PC-9 (cell line): ENCODE measurements at regions of chr18 and their contacts with region 1.

Region 1: DNA sequence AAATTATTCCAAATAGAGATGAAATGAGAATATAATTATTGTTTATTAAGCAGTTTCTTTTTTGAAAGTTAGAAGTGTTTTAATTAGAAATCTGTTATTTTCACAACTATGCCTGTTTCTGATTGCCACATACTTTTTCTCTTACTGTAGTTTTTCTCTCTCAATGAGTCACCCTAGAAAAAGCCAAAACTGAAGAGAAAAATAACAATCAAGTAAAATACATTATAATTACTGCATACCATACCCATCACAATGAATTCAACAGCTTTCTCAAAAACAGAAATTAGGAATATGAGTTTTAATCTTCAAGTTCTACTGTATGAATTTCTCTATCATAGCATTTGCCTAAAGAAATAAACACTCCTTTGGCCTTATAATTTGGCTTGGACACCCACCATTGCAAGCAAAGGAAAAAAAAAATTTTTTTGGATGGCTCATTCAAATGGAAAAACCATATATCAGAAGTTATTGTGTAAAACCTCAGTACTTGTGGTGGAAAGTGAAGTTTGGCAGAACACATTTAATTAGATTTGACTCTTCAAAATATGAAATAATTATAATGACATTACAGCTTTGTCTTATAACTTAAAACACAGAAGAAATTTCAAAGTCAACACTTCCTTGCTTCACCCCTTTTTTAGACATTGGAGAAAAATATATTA is 138.5 kb downstream of the DYM start:
- DNase-seq: no peak
- H3K4me3 ChIP-seq: no peak overlapping the region
- H3K27ac ChIP-seq: peak overlapping the region; percentile 55
- H3K4me1 ChIP-seq: peaks cover 13% of the 10 kb centered on the region
- H3K27me3 ChIP-seq: no peaks in the 10 kb centered on the region
- CTCF ChIP-seq: no peak

Region 2: DNA sequence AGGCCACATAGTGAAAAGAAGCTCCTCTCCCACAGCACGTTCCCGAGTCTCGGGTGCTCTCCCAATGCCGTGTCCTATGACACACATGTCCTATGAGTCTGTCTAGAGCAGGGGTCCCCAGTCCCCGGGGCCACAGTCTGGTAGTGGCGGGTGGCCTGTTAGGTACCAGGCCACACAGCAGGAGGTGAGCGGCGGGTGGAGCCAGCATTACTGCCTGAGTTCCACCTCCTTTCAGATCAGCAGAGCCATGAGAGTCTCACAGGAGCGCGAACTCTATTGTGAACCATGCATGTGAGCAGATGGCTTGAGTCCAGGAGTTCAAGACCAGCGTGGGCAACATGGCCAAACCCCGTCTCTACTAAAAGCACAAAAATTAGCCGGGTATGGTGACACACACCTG is 1025.3 kb before region 1 on chr18:
- CTCF ChIA-PET with region 1: no interaction called
- POLR2A ChIA-PET with region 1: interaction called, 13 read pairs
- intact Hi-C with region 1: no loop called
- DNase-seq: no peak
- H3K4me3 ChIP-seq: no peak overlapping the region
- H3K27ac ChIP-seq: no peak overlapping the region
- H3K4me1 ChIP-seq: peaks cover 45% of the 10 kb centered on the region
- H3K27me3 ChIP-seq: no peaks in the 10 kb centered on the region
- CTCF ChIP-seq: no peak

Region 3: GRCh38 chr18:48861181-48861708 is 460.7 kb before region 1 on chr18:
- CTCF ChIA-PET with region 1: interaction called, 11 read pairs
- POLR2A ChIA-PET with region 1: no interaction called
- intact Hi-C with region 1: no loop called
- DNase-seq: no peak
- H3K4me3 ChIP-seq: no peak overlapping the region
- H3K27ac ChIP-seq: no peak overlapping the region
- H3K4me1 ChIP-seq: no peaks in the 10 kb centered on the region
- H3K27me3 ChIP-seq: no peaks in the 10 kb centered on the region
- CTCF ChIP-seq: no peak

Region 4: GRCh38 chr18:49274188-49274714 is 47.7 kb before region 1 on chr18:
- CTCF ChIA-PET with region 1: no interaction called
- POLR2A ChIA-PET with region 1: no interaction called
- intact Hi-C with region 1: no loop called
- DNase-seq: no peak
- H3K4me3 ChIP-seq: no peak overlapping the region
- H3K27ac ChIP-seq: peak overlapping the region; percentile 13; the same call in 1 of the 2 replicates
- H3K4me1 ChIP-seq: peaks cover 9% of the 10 kb centered on the region; the same call in 1 of the 2 replicates
- H3K27me3 ChIP-seq: no peaks in the 10 kb centered on the region
- CTCF ChIP-seq: no peak

Region 5: GRCh38 chr18:49697757-49698524 is 376.0 kb after region 1 on chr18:
- CTCF ChIA-PET with region 1: no interaction called
- POLR2A ChIA-PET with region 1: no interaction called
- intact Hi-C with region 1: no loop called
- DNase-seq: no peak
- H3K4me3 ChIP-seq: no peak overlapping the region
- H3K27ac ChIP-seq: no peak overlapping the region
- H3K4me1 ChIP-seq: no peaks in the 10 kb centered on the region
- H3K27me3 ChIP-seq: no peaks in the 10 kb centered on the region
- CTCF ChIP-seq: no peak